Pancreas (tissue), 10 donors: ENCODE measurements at regions of chr15 and their contacts with region 1.

Region 1: DNA sequence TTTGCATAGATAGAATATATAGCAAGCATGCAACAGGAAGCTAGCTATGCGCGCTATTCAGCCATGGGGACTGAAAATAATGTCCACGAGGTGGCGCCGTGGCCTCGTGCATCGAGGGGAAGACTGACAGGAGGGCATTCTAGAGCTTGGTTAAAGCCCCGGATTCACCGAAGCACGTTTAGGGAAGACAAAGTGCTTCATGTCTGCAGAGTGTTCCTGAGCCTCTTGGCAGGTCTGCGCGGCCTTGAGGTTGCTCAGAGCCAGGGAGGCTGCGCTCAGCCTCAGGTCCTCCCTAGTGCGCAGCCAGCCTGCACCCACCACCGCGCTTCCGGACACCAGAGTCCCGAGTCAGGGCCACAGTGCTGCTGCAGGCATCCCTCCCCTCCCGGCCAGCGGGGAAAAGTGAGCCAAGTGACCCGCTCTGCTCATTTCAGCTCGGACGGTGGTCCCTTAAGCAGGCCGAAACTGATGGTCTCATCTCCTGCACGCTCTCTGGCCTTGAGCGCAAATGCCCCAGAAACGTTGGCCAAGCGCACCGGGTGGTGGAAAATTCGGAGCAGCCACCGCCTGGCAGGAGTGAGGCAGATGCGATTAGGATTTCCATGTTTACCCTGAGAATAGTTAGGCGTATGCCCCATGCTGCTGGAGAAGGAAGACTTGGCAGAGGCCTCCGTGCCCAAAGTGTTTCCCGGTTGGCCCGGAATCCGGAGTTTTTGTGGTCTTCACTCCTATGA is 24.8 kb downstream of the GABRA5 start:
- DNase-seq: peak in 5 of 6 donors; percentile 22 to 84 (median 55)
- ATAC-seq: peak; percentile 52 to 79 (median 76)
- H3K4me3 ChIP-seq: peak overlapping the region in 1 of 4 donors; percentile 1
- H3K27ac ChIP-seq: no peak overlapping the region
- H3K4me1 ChIP-seq: peaks cover 4 to 9% (median 5%) of the 10 kb centered on the region in 3 donors
- H3K27me3 ChIP-seq: peaks cover 0 to 16% (median 0%) of the 10 kb centered on the region in 4 donors
- CTCF ChIP-seq: peak; percentile 27 to 63 (median 38)

Region 2: GRCh38 chr15:27017168-27017809 is 125.7 kb after region 1 on chr15:
- intact Hi-C with region 1: loop called in 1 of 3 experiments (anchors 5 kb)
- DNase-seq: peak in 3 of 6 donors; percentile 29 to 54 (median 47)
- ATAC-seq: peak; percentile 61 to 95 (median 90)
- H3K4me3 ChIP-seq: no peak overlapping the region
- H3K27ac ChIP-seq: no peak overlapping the region
- H3K4me1 ChIP-seq: no peaks in the 10 kb centered on the region
- H3K27me3 ChIP-seq: peaks cover 0 to 10% (median 0%) of the 10 kb centered on the region in 4 donors
- CTCF ChIP-seq: peak; percentile 21 to 81 (median 46)

Region 3: GRCh38 chr15:27046880-27047279 is 155.3 kb after region 1 on chr15:
- intact Hi-C with region 1: no loop called
- DNase-seq: no peak
- ATAC-seq: no peak
- H3K4me3 ChIP-seq: no peak overlapping the region
- H3K27ac ChIP-seq: no peak overlapping the region
- H3K4me1 ChIP-seq: no peaks in the 10 kb centered on the region
- H3K27me3 ChIP-seq: no peaks in the 10 kb centered on the region
- CTCF ChIP-seq: no peak